ENCODE measurements at regions of chr12 and their contacts with region 1.

Region 1: GRCh38 chr12:12017798-12018197 is 52.9 kb upstream of the BCL2L14 start:
- DNase-seq: no peak
- H3K27ac ChIP-seq: no peak overlapping the region
- CTCF ChIP-seq: no peak

Region 2: DNA sequence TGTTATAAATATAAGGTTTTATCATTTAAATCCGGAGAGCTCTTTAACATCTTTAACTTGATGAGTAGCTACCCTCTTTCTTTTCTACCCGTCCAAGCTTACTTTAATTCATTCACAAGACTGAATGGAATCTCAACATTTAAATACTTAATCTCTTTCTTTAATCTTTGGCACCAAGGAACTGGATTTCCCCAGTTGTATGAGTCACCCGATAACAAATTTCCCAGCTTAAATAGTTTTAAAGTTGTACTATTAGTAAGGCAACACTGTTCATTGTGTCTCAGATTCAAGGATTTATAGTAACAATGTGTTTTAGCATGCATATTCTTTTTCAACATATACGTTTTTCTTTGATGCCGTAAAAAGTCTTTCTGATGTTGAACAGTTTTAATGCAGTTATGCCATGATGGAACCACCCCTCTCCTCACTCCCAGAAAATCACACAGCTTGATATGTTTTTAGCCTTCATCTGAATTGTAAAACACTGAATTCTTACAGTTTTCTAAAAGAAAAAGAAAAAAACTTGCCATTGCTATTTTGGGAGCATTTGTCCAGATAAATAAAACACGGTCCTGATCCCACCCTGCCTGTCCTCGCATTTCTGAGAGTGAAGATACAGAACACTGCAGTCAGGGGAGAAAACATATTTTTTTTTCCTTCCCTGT is 265.1 kb after region 1 on chr12:
- CTCF ChIA-PET with region 1: interaction called, 12 read pairs
- POLR2A ChIA-PET with region 1: no interaction called
- DNase-seq: peak; percentile 23
- H3K27ac ChIP-seq: no peak overlapping the region
- CTCF ChIP-seq: no peak